Psoas muscle (tissue), 8 donors: ENCODE measurements at regions of chr7 and their contacts with region 1.

Region 1: GRCh38 chr7:29806208-29806994 is at the start of gene WIPF3:
- DNase-seq: peak; percentile 48 to 66
- ATAC-seq: peak; percentile 73 to 81 (median 75)
- H3K4me3 ChIP-seq: peak within 1 kb of the TSS; percentile 80
- H3K27ac ChIP-seq: peak within 1 kb of the TSS; percentile 91
- H3K4me1 ChIP-seq: peaks cover 17% of the 10 kb centered on the region
- H3K27me3 ChIP-seq: no peaks in the 10 kb centered on the region
- CTCF ChIP-seq: peak; percentile 8
- total RNA-seq, gene WIPF3: 18.5 to 30.7 (median 23.8) TPM

Region 2: GRCh38 chr7:29748286-29749108 is 57.9 kb before region 1 on chr7:
- intact Hi-C with region 1: loop called (anchors 5 to 10 kb)
- DNase-seq: no peak
- ATAC-seq: peak; percentile 75 to 90 (median 77)
- H3K4me3 ChIP-seq: no peak overlapping the region
- H3K27ac ChIP-seq: no peak overlapping the region
- H3K4me1 ChIP-seq: peaks cover 4% of the 10 kb centered on the region
- H3K27me3 ChIP-seq: no peaks in the 10 kb centered on the region
- CTCF ChIP-seq: peak; percentile 65

Region 3: DNA sequence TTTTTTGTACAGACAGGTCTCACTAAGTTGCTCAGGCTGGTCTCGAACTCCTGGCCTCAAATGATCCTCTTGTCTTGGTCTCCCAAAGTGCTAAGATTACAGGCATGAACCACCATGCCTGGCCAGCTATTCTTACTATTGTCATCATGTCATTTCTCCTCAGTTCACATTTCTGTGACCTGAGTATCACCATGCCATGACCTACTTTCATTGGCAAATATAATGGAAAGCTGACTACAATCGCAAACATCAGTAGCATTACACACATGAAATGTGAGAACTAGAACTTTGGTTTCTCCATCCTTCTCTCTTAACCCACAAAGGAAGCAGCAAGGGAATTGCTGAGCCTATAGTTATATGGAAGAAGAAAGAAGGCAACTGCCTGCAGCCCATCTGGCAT is 26.1 kb before region 1 on chr7:
- intact Hi-C with region 1: no loop called
- DNase-seq: no peak
- ATAC-seq: peak; percentile 90 to 98 (median 94)
- H3K4me3 ChIP-seq: no peak overlapping the region
- H3K27ac ChIP-seq: no peak overlapping the region
- H3K4me1 ChIP-seq: no peaks in the 10 kb centered on the region
- H3K27me3 ChIP-seq: no peaks in the 10 kb centered on the region
- CTCF ChIP-seq: no peak

Region 4: DNA sequence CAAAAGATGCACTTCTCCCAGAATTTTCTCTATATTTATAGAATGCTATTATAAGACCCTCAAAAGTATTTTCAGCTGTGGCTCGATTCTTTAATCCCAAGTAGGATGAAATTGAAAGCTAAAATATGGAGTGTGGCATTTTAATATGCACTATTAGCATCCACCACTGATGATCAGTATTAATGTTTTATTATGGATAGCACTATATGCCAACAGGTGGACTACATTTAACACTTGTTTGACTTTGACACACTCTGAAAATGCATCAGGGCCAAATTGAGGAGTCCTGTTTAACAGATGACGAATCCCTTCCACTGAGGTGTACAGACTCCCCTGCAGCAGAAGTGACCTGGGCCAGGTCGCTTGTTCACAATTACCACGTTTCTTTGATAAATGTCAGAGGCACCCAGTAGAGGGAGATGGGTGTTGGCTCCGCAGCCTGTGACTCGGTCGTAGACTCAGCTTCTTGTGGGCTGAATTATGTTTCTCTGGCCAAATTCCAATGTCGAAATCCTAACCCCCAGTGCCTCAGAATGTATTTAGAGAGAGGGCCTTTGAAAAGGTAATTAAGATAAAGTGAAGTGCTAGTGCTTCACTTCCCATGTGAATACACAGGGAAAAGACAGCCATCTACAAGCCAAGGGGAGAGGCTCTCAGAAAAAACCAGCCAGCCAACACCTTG is 48.0 kb after region 1 on chr7:
- intact Hi-C with region 1: loop called (anchors 5 kb)
- DNase-seq: no peak
- ATAC-seq: peak in 2 of 4 donors; percentile 9 to 21
- H3K4me3 ChIP-seq: no peak overlapping the region
- H3K27ac ChIP-seq: peak overlapping the region; percentile 89
- H3K4me1 ChIP-seq: peaks cover 65% of the 10 kb centered on the region
- H3K27me3 ChIP-seq: no peaks in the 10 kb centered on the region
- CTCF ChIP-seq: peak; percentile 20

Region 5: GRCh38 chr7:29871787-29872396 is 65.5 kb after region 1 on chr7:
- intact Hi-C with region 1: loop called in 1 of 2 experiments (anchors 5 kb)
- DNase-seq: no peak
- ATAC-seq: no peak
- H3K4me3 ChIP-seq: no peak overlapping the region
- H3K27ac ChIP-seq: peak overlapping the region; percentile 20
- H3K4me1 ChIP-seq: peaks cover 27% of the 10 kb centered on the region
- H3K27me3 ChIP-seq: no peaks in the 10 kb centered on the region
- CTCF ChIP-seq: no peak

Region 6: GRCh38 chr7:30026229-30027064 is 220.0 kb after region 1 on chr7 and contains the start of gene FKBP14:
- intact Hi-C with region 1: loop called in 1 of 2 experiments (anchors 5 kb)
- DNase-seq: peak; percentile 97 to 98
- ATAC-seq: peak; percentile 92 to 97 (median 93)
- H3K4me3 ChIP-seq: peak within 1 kb of the TSS; percentile 94
- H3K27ac ChIP-seq: peak within 1 kb of the TSS; percentile 94
- H3K4me1 ChIP-seq: peaks cover 26% of the 10 kb centered on the region
- H3K27me3 ChIP-seq: no peaks in the 10 kb centered on the region
- CTCF ChIP-seq: no peak
- total RNA-seq, gene FKBP14: 4.1 to 5.0 (median 4.5) TPM